ENCODE measurements at regions of chr3 and their contacts with region 1.

Region 1: DNA sequence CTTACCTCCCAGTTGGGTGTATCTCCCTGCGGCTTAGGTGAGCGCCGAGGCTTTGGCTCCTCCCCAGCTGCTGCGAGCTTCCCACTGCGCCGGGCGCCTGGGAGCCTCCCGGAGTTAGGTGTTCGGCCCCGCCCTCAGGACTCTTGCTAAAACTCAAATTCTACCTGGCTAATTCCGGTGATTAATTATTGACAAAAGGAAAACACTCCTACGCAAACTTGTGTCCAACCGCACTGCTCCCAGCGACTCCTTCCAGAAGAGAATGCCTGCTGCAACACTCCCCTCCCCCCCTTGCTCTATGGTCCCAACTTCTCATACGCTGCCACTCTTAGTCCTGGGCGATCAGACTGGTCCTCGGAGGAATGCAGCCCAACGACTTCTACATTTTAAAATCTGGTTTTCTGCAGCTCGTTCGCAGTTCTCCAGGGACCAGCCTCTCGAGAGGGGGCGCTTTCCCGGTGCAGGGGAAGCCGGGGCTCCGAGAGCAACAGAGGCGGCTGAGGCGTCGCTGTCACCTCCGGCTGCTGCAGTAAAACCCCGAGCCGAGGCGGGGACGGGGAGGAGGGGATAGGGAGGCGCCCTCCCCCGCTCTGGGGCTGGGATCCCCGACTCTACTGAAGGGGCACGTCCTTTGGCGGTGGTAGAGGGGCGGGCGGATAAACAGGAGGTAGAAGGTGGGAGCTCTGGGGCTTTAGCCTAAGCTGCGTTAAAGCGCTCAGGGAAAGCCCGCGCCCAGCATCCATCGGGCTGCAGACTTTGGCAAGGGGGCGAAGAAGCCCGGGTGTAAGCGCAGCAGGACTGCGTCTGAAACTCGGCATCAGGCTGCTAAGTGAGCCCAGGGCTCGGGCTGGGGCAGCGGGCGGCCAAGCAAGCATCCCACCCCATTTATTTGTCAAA is at the start of gene SPTSSB:
- DNase-seq: peak; percentile 21 to 57 (median 43)
- ATAC-seq: peak; percentile 75
- H3K4me3 ChIP-seq: peak within 1 kb of the TSS; percentile 68
- H3K4me3 Mint-ChIP-seq: peak within 1 kb of the TSS; percentile 79 to 93 (median 88)
- H3K27ac ChIP-seq: no peak within 1 kb of the TSS
- H3K27ac Mint-ChIP-seq: peak within 1 kb of the TSS in 3 of 9 donors; percentile 46 to 64 (median 57)
- H3K4me1 ChIP-seq: peaks cover 7% of the 10 kb centered on the region in 2 donors
- H3K4me1 Mint-ChIP-seq: peaks cover 7 to 21% (median 18%) of the 10 kb centered on the region in 7 donors
- H3K27me3 ChIP-seq: peaks cover 0 to 15% of the 10 kb centered on the region in 2 donors
- H3K27me3 Mint-ChIP-seq: peaks cover 6 to 84% (median 22%) of the 10 kb centered on the region in 5 donors
- total RNA-seq, gene SPTSSB: 0.34 to 1.6 TPM in 2 of 5 experiments, not detected in the others

Region 2: GRCh38 chr3:160754855-160755747 is 616.6 kb before region 1 on chr3:
- CTCF ChIA-PET with region 1: no interaction called
- POLR2A ChIA-PET with region 1: no interaction called
- intact Hi-C with region 1: loop called in 1 of 2 experiments (anchors 10 kb)
- DNase-seq: peak; percentile 76 to 88 (median 85)
- ATAC-seq: peak; percentile 92
- H3K4me3 ChIP-seq: peak overlapping the region; percentile 73
- H3K4me3 Mint-ChIP-seq: peak overlapping the region; percentile 88 to 99 (median 96)
- H3K27ac ChIP-seq: peak overlapping the region; percentile 69
- H3K27ac Mint-ChIP-seq: peak overlapping the region; percentile 88 to 97 (median 94)
- H3K4me1 ChIP-seq: peaks cover 10 to 11% of the 10 kb centered on the region in 2 donors
- H3K4me1 Mint-ChIP-seq: peaks cover 27 to 36% (median 30%) of the 10 kb centered on the region in 7 donors
- H3K27me3 ChIP-seq: peaks cover 0 to 6% of the 10 kb centered on the region in 2 donors
- H3K27me3 Mint-ChIP-seq: peaks cover 5 to 41% (median 10%) of the 10 kb centered on the region in 5 donors

Region 3: DNA sequence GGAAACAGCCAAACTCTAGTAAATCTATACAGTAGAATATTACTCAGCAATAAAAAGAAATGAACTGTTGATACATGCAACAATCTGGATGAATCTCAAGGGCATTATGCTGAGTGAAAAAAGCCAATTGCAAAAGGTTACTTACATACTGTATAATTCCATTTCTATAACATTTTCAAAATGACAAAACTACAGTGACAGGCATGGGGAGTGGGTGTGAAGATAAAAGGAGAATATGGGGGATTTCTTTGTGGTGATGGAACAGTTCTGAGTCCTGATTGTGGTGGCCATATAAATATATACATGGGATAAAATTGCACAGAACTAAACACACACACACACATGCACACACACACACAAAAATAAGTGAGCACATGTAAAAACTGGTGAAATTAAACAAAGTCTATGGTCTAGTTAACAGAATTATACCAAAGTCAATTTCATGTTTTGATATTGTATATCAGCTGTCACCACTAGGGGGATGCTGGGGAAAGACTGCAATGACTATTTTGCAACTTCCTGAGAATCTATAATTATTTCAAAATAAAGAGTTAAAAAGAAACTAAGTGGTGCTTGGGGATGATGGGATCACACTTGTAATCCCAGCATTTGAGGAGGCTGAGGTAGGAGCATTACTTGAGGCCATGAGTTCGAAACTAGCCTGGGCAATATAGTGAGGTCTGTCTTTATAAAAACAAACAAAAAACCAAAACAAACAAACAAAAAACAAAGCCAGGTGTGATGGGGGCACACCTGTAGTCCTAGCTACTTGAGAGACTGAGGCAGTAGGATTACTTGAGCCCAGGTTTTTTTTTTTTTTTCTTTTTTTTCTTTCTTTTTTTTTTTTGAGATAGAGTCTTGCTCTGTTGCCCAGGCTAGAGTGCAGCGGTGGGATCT is 66.3 kb before region 1 on chr3:
- CTCF ChIA-PET with region 1: interaction called, 3 read pairs
- POLR2A ChIA-PET with region 1: no interaction called
- intact Hi-C with region 1: loop called in 1 of 2 experiments (anchors 1 kb)
- DNase-seq: peak in 5 of 9 donors; percentile 21 to 41 (median 25)
- ATAC-seq: peak; percentile 51
- H3K4me3 ChIP-seq: no peak overlapping the region
- H3K4me3 Mint-ChIP-seq: no peak overlapping the region
- H3K27ac ChIP-seq: no peak overlapping the region
- H3K27ac Mint-ChIP-seq: no peak overlapping the region
- H3K4me1 ChIP-seq: peaks cover 18 to 20% of the 10 kb centered on the region in 2 donors
- H3K4me1 Mint-ChIP-seq: peaks cover 4 to 49% (median 38%) of the 10 kb centered on the region in 7 donors
- H3K27me3 ChIP-seq: no peaks in the 10 kb centered on the region
- H3K27me3 Mint-ChIP-seq: peaks cover 0 to 70% (median 0%) of the 10 kb centered on the region in 5 donors

Region 4: DNA sequence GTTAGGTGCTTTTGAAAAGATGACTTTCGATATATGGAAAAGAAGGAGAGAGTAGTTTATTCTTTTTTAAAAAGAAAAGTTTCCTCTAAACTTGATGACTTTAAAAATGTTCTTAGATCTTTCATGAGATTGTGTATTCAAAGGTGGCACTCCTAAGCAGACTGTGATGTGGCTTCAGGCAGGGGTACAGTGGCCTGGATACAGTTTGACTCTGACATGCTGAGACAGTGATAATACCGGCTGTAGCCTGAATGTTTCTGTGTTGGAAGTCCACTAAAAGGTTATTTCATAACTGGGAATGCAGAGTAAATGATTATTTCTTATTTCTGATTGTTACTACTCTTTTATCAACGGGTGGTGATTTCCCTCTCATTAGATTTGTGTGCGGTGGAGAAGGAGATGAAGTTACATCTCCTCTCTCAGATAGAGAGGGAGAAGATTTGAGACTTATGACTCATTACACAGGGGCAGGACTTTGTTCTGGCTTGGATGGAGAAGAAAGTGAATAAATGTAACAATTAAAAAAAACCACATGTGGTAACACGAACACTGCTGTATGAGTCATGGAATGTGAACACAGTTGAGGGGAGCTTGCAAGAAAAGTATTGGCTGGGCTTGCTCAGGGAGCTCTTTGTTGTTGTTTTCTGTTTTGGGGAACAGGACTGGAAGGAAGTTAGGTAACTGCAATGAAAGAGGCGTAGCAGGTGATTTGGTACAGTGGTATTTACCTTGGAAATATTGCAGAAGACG is 22.0 kb before region 1 on chr3:
- CTCF ChIA-PET with region 1: no interaction called
- POLR2A ChIA-PET with region 1: no interaction called
- intact Hi-C with region 1: loop called in 1 of 2 experiments (anchors 1 kb)
- DNase-seq: peak in 5 of 9 donors; percentile 10 to 57 (median 23)
- ATAC-seq: peak; percentile 87
- H3K4me3 ChIP-seq: no peak overlapping the region
- H3K4me3 Mint-ChIP-seq: peak overlapping the region in 5 of 10 donors; percentile 2 to 40 (median 10)
- H3K27ac ChIP-seq: no peak overlapping the region
- H3K27ac Mint-ChIP-seq: peak overlapping the region in 5 of 9 donors; percentile 2 to 49 (median 16)
- H3K4me1 ChIP-seq: peaks cover 7 to 14% of the 10 kb centered on the region in 2 donors
- H3K4me1 Mint-ChIP-seq: peaks cover 6 to 22% (median 17%) of the 10 kb centered on the region in 7 donors
- H3K27me3 ChIP-seq: no peaks in the 10 kb centered on the region
- H3K27me3 Mint-ChIP-seq: peaks cover 0 to 55% (median 0%) of the 10 kb centered on the region in 5 donors

Region 5: DNA sequence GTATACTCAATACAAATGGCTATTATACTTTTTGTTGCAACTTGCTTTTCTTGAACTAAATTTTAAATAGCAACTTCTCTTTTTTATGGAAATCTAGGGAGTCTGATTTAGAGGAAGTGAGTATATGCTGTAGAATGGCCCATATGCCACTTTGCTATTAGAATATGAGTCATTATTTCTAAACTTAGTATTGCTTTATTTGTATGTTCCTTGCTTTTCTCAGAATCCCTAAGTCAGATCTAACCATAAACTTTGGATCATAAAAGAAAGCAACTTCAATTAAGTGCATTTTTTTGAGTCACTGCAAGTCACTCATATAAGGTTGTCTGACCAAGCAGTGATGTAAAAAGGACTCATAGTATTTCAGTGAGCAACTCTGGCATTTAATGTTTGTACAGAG is 17.2 kb after region 1 on chr3:
- CTCF ChIA-PET with region 1: no interaction called
- POLR2A ChIA-PET with region 1: interaction called, 3 read pairs
- intact Hi-C with region 1: loop called in 1 of 2 experiments (anchors 2 kb)
- DNase-seq: no peak
- ATAC-seq: peak; percentile 67
- H3K4me3 ChIP-seq: no peak overlapping the region
- H3K4me3 Mint-ChIP-seq: no peak overlapping the region
- H3K27ac ChIP-seq: no peak overlapping the region
- H3K27ac Mint-ChIP-seq: no peak overlapping the region
- H3K4me1 ChIP-seq: peaks cover 6 to 17% of the 10 kb centered on the region in 2 donors
- H3K4me1 Mint-ChIP-seq: peaks cover 3 to 41% (median 34%) of the 10 kb centered on the region in 7 donors
- H3K27me3 ChIP-seq: peaks cover 0 to 4% of the 10 kb centered on the region in 2 donors
- H3K27me3 Mint-ChIP-seq: peaks cover 0 to 69% (median 17%) of the 10 kb centered on the region in 5 donors

Measured in naive thymus-derived CD4-positive, alpha-beta T cell (primary cell).